HEK293 (cell line): ENCODE measurements at regions of chr1 and their contacts with region 1.

Region 1: GRCh38 chr1:40438391-40439015 is 11.8 kb upstream of the ZFP69B start:
- H3K4me3 ChIP-seq: no peak overlapping the region
- H3K27ac ChIP-seq: no peak overlapping the region
- H3K4me1 ChIP-seq: no peaks in the 10 kb centered on the region
- CTCF ChIP-seq: no peak

Region 2: DNA sequence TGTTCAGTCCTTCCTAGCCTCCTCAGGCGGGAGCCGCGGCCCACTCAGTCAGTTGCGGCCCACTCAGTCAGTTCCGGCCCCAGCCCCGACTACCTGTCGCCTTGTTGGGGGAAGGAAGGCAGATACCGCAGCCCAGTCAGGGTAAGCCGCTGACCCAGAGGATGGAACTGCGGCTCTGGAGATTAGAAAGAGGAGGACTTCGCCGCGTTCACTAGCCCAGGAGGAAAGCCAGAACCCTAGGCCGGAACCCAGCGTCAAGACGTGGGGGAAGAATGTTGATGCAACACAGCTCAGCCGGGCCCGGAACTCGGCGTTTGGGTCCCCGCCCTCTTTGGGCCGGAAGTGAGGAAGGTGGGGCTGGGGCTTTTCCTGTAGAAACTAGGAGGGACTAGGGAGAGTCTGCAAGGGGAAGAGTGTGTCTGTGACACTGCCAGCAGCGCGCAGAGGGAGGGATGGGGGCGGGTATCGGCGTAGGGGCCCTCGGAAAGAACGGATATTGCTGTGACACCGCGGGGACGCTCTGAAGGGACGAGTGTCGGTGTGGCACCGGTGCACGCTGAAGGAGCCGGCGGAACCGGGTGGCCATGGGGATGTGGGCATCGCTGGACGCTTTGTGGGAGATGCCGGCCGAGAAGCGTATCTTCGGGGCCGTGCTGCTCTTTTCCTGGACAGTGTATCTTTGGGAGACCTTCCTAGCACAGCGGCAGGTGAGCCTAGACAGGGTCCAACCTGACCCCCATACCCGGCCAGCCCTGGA is 180.6 kb before region 1 on chr1 and contains the start of gene ZMPSTE24:
- CTCF ChIA-PET with region 1: no interaction called
- POLR2A ChIA-PET with region 1: no interaction called
- H3K4me3 ChIP-seq: peak within 1 kb of the TSS; percentile 89
- H3K27ac ChIP-seq: peak within 1 kb of the TSS; percentile 85
- H3K4me1 ChIP-seq: no peaks in the 10 kb centered on the region
- CTCF ChIP-seq: peak; percentile 67

Region 3: GRCh38 chr1:40425198-40425597 is 13.3 kb before region 1 on chr1:
- CTCF ChIA-PET with region 1: interaction called, 22 read pairs
- POLR2A ChIA-PET with region 1: no interaction called
- H3K4me3 ChIP-seq: no peak overlapping the region
- H3K27ac ChIP-seq: no peak overlapping the region
- H3K4me1 ChIP-seq: peaks cover 6% of the 10 kb centered on the region
- CTCF ChIP-seq: no peak

Region 4: DNA sequence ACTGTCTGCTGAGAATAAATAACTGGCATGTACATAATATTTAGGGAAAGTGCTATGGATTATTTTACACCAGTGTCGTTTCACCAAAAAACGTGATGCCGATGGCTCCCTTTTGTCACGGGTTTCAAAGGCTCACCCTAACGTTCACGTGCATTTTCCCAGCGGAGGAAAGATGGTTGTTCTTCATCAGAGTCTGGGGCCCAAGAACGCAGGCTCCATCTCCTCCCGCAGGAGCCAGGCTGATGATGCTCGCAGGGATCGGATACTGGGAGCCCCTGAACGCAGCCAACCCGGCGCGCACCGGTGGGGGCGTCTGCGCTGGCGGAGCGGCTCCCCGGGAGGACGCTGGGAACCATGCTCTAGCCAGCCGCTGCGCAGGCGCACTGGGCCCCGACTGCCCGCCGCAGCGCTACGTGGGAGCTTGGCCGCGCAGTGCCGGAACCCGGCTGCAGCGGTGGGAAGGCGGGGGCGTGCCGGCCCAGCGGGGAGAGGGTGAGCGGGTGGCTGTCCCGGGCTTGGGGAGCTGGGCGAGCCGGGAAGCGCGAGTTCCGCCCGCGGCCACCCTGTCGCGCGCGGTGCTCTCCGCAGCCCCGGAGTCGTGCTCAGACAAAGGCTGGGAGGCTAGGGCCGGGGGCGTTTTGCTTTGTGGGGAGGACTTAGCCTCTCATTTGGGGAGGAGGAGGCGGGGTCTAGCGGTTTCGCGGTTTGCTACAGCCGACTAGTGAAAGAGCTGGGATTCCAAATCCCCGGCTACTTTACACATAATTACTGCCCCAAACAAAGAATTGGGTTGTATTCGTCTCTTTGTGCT is 11.4 kb after region 1 on chr1 and contains the start of gene ZFP69B:
- CTCF ChIA-PET with region 1: interaction called, 21 read pairs
- POLR2A ChIA-PET with region 1: interaction called, 5 read pairs
- H3K4me3 ChIP-seq: peak within 1 kb of the TSS; percentile 59
- H3K27ac ChIP-seq: peak within 1 kb of the TSS; percentile 13; the same call in 1 of the 2 replicates
- H3K4me1 ChIP-seq: no peaks in the 10 kb centered on the region
- CTCF ChIP-seq: 0 out of 2 replicates have a peak, but pooled peaks have one; percentile 65